B cell (primary cell): ENCODE measurements at regions of chr12 and their contacts with region 1.

Region 1: DNA sequence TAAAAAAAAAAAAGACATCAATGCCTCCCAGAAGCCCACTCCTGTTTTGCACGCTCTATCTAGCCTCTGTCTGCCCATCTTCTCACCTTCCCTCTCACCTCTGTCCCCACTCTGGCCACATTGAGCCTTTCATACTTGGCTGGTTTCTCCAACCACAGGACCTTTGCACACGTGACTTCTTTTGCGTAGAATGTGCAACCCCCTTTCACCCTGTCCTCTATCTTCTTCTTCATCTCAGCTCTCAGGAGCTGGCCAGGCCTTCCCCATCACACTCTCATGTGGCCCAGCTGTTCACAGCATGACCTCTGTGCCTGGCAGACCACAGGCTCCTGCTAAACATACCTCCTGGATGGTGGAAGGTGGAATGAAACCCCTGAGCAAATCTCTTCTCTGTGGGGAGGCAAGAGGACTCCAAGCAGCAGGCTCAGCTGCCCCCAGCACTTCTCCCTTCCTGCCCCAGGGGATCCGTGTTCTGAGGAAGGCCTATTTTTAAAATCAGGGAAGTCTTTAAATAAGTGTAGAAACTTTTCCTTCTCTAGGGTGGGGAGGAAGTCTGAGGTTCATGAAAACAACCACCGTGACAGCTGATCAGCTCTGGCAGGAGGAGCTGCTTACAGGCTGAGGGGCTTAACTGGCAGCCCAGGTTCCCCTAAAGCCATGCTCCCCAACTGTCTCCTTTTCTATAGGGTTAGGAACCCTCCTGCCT is 11.6 kb downstream of the HVCN1 start:
- DNase-seq: peak; percentile 76
- ATAC-seq: peak; percentile 65
- H3K4me3 ChIP-seq: peak overlapping the region; percentile 1 to 39 (median 30)
- H3K4me3 Mint-ChIP-seq: peak overlapping the region; percentile 70
- H3K27ac ChIP-seq: peak overlapping the region; percentile 68 to 82
- H3K27ac Mint-ChIP-seq: peak overlapping the region; percentile 82
- H3K4me1 ChIP-seq: peaks cover 96 to 100% of the 10 kb centered on the region in 2 donors
- H3K4me1 Mint-ChIP-seq: peaks cover 85% of the 10 kb centered on the region
- H3K27me3 ChIP-seq: no peaks in the 10 kb centered on the region
- H3K27me3 Mint-ChIP-seq: no peaks in the 10 kb centered on the region
- CTCF ChIP-seq: no peak

Region 2: DNA sequence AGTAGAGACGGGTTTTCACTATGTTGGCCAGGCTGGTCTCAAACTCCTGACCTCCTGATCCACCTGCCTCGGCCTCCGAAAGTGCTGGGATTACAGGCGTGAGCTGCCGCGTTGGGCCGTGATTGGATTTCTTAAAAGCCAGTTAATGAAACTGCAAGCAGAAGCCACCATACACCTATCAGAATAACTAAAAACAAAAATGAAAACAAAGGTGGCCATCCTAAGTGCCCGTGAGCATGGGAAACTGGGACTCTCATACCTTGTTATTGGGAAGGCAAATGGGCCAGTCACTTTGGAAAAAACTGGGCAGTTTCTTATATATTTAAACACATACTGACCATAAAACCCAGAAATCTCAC is 71.1 kb before region 1 on chr12:
- CTCF ChIA-PET with region 1: interaction called, 3 read pairs
- POLR2A ChIA-PET with region 1: interaction called, 10 read pairs
- intact Hi-C with region 1: no loop called
- DNase-seq: peak; percentile 43
- ATAC-seq: no peak
- H3K4me3 ChIP-seq: peak overlapping the region; percentile 7 to 74 (median 55)
- H3K4me3 Mint-ChIP-seq: peak overlapping the region; percentile 77
- H3K27ac ChIP-seq: peak overlapping the region; percentile 77 to 94
- H3K27ac Mint-ChIP-seq: peak overlapping the region; percentile 88
- H3K4me1 ChIP-seq: peaks cover 71 to 83% of the 10 kb centered on the region in 2 donors
- H3K4me1 Mint-ChIP-seq: peaks cover 65% of the 10 kb centered on the region
- H3K27me3 ChIP-seq: no peaks in the 10 kb centered on the region
- H3K27me3 Mint-ChIP-seq: no peaks in the 10 kb centered on the region
- CTCF ChIP-seq: no peak

Region 3: GRCh38 chr12:110647631-110648040 is 29.7 kb before region 1 on chr12:
- CTCF ChIA-PET with region 1: interaction called, 5 read pairs
- POLR2A ChIA-PET with region 1: interaction called, 14 read pairs
- intact Hi-C with region 1: no loop called
- DNase-seq: peak; percentile 95
- ATAC-seq: peak; percentile 85
- H3K4me3 ChIP-seq: peak overlapping the region in 1 of 5 experiments; percentile 5
- H3K4me3 Mint-ChIP-seq: peak overlapping the region; percentile 79
- H3K27ac ChIP-seq: peak overlapping the region; percentile 90
- H3K27ac Mint-ChIP-seq: peak overlapping the region; percentile 98
- H3K4me1 ChIP-seq: peaks cover 90% of the 10 kb centered on the region in 2 donors
- H3K4me1 Mint-ChIP-seq: peaks cover 91% of the 10 kb centered on the region
- H3K27me3 ChIP-seq: no peaks in the 10 kb centered on the region
- H3K27me3 Mint-ChIP-seq: no peaks in the 10 kb centered on the region
- CTCF ChIP-seq: no peak

Region 4: GRCh38 chr12:110661337-110661972 is 15.9 kb before region 1 on chr12:
- CTCF ChIA-PET with region 1: interaction called, 4 read pairs
- POLR2A ChIA-PET with region 1: interaction called, 4 read pairs
- intact Hi-C with region 1: loop called (anchors 1 kb)
- DNase-seq: peak; percentile 93
- ATAC-seq: peak; percentile 85
- H3K4me3 ChIP-seq: peak overlapping the region in 4 of 5 experiments; percentile 5 to 44 (median 16)
- H3K4me3 Mint-ChIP-seq: peak overlapping the region; percentile 92
- H3K27ac ChIP-seq: peak overlapping the region; percentile 96 to 99
- H3K27ac Mint-ChIP-seq: peak overlapping the region; percentile 98
- H3K4me1 ChIP-seq: peaks cover 59 to 82% of the 10 kb centered on the region in 2 donors
- H3K4me1 Mint-ChIP-seq: peaks cover 81% of the 10 kb centered on the region
- H3K27me3 ChIP-seq: no peaks in the 10 kb centered on the region
- H3K27me3 Mint-ChIP-seq: no peaks in the 10 kb centered on the region
- CTCF ChIP-seq: no peak